ENCODE measurements at regions of chr9 and their contacts with region 1.

Region 1: DNA sequence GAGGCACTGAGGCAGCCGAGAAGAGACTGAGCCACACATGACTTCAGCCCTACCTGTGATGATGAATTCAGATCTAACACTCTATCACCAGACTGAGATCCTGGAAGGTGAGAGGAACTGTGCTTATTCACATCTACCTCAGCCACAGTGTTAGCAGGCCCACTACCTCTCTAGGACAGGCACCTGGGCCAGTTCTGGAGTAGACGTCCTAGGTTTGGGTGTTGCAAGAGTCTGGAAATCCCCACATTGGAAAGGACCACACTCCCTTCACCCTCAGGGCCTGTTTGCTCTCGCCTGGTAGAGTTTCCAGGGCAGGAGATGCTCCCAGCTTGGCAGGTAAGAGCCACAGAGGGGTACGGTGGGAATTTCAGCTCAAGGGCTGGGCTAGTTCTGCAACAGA is 113.8 kb upstream of the CCL21 start:
- DNase-seq: peak; percentile 60
- H3K4me3 ChIP-seq: no peak overlapping the region
- H3K27ac ChIP-seq: no peak overlapping the region
- H3K4me1 ChIP-seq: no peaks in the 10 kb centered on the region
- H3K27me3 ChIP-seq: no peaks in the 10 kb centered on the region
- CTCF ChIP-seq: no peak

Region 2: DNA sequence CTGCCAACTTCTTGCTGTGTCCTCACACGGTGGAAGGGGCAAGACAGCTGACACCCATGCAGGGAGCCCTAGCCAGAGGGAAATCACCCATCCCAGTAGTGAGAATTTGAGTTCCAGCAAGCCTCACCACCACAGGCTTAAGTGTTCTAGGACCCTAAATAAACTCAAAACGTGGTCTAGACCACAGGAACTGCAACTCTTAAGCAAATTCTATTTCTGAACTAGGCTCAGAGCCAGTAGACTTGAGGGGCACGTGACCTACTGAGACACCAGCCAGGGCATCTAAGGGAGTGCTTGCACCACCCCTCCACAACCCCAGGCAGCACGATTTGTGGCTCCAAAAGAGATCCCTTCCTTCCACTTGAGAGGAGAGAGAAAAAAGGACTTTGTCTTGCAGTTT is 38.3 kb after region 1 on chr9:
- CTCF ChIA-PET with region 1: no interaction called
- dilution Hi-C with region 1: loop called (anchors 5 kb)
- in situ Hi-C with region 1: no loop called
- intact Hi-C with region 1: no loop called
- DNase-seq: no peak
- H3K4me3 ChIP-seq: no peak overlapping the region
- H3K27ac ChIP-seq: no peak overlapping the region
- H3K4me1 ChIP-seq: no peaks in the 10 kb centered on the region
- H3K27me3 ChIP-seq: no peaks in the 10 kb centered on the region
- CTCF ChIP-seq: no peak

Region 3: DNA sequence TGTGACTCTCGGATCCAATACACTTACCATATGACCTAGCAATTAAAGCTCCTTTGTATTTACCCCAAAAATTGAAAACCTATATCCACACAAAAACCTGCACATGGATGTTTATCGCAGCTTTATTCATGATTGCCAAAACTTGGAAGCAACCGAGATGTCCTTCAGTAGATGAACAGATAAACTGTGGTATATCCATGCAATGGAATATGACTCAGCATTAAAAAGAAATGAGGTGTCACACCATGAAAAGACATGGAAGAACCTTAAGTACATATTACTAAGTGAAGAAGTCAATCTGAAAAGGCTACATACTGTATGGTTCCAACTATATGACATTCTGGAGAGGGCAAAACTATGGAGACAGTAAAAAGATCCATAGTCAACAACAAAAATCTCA is 52.3 kb after region 1 on chr9:
- CTCF ChIA-PET with region 1: no interaction called
- dilution Hi-C with region 1: no loop called
- in situ Hi-C with region 1: no loop called
- intact Hi-C with region 1: no loop called
- DNase-seq: peak; percentile 22
- H3K4me3 ChIP-seq: no peak overlapping the region
- H3K27ac ChIP-seq: peak overlapping the region; percentile 67
- H3K4me1 ChIP-seq: peaks cover 13% of the 10 kb centered on the region
- H3K27me3 ChIP-seq: no peaks in the 10 kb centered on the region
- CTCF ChIP-seq: no peak

Region 4: DNA sequence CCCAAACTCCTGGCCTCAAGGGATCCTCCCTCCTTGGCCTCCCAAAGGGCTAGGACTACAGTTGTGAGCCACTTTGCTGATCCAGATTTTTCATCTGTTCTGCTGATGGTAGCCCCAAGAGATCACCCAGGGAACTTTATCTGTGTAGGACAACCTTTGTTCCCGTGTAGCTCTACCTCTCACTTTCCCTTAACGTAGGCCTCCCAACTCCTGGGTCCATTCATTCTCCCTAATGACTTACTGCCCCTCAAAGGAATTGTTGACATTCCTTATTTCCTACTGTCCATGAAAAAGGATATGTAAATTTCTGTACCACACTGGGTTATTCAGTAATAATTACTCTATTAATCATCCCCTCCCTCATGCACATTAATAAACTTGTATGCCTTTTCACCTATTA is 83.3 kb after region 1 on chr9:
- CTCF ChIA-PET with region 1: no interaction called
- dilution Hi-C with region 1: loop called (anchors 5 kb)
- in situ Hi-C with region 1: no loop called
- intact Hi-C with region 1: no loop called
- DNase-seq: no peak
- H3K4me3 ChIP-seq: no peak overlapping the region
- H3K27ac ChIP-seq: no peak overlapping the region
- H3K4me1 ChIP-seq: no peaks in the 10 kb centered on the region
- H3K27me3 ChIP-seq: peaks cover 2% of the 10 kb centered on the region
- CTCF ChIP-seq: no peak